A549 (cell line): ENCODE measurements at regions of chr1 and their contacts with region 1.

Region 1: GRCh38 chr1:31995263-31995662 is 18.4 kb upstream of the KHDRBS1 start:
- DNase-seq: no peak
- ATAC-seq: no peak
- H3K4me3 ChIP-seq: no peak overlapping the region
- H3K27ac ChIP-seq: no peak overlapping the region
- H3K4me1 ChIP-seq: no peaks in the 10 kb centered on the region
- CTCF ChIP-seq: no peak
- EP300 ChIP-seq: no peak
- POLR2A ChIP-seq: no peak
- RAD21 ChIP-seq: no peak

Region 2: GRCh38 chr1:32005522-32005921 is 10.3 kb after region 1 on chr1:
- CTCF ChIA-PET with region 1: interaction called, 13 read pairs
- POLR2A ChIA-PET with region 1: no interaction called
- DNase-seq: no peak
- ATAC-seq: no peak
- H3K4me3 ChIP-seq: no peak overlapping the region
- H3K27ac ChIP-seq: no peak overlapping the region
- H3K4me1 ChIP-seq: peaks cover 6% of the 10 kb centered on the region; the same call in 1 of the 3 replicates
- CTCF ChIP-seq: no peak
- EP300 ChIP-seq: no peak
- POLR2A ChIP-seq: no peak
- RAD21 ChIP-seq: no peak